ENCODE measurements at regions of chr11 and their contacts with region 1.

Region 1: DNA sequence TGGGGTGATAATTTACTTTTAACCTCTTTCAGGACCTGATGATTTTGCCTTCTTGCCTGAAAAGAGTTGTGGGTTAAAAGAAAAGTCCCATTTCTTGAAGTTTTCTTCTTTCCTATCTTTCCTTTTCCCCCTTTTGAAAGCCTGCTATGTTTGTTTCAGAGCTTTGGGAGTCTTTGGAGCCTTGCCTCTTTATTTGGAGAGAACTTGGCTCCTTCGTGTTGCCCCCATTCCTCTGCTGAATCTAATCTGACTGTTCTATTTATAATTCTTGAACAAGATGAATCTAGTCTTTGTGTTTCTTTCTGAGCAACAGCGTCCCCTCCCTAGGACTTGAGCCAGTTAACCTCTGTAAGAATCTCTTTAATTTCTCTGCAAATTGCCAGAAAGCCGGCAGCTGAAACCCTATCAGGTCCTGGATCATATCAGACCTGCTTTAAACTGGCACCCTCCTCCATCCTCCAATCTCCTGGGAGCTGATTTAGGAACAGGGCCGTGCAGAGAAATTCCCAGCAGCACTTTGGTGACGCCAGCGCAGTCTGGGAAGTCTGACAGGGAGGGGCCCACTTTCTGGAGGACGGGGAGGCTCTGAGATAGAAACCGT is 289.1 kb upstream of the SORL1-AS1 start:
- DNase-seq: peak; percentile 7
- H3K4me3 ChIP-seq: no peak overlapping the region
- H3K27ac ChIP-seq: peak overlapping the region; percentile 53 to 60
- H3K4me1 ChIP-seq: no peaks in the 10 kb centered on the region
- H3K27me3 ChIP-seq: no peaks in the 10 kb centered on the region
- CTCF ChIP-seq: no peak
- POLR2A ChIP-seq: no peak

Region 2: DNA sequence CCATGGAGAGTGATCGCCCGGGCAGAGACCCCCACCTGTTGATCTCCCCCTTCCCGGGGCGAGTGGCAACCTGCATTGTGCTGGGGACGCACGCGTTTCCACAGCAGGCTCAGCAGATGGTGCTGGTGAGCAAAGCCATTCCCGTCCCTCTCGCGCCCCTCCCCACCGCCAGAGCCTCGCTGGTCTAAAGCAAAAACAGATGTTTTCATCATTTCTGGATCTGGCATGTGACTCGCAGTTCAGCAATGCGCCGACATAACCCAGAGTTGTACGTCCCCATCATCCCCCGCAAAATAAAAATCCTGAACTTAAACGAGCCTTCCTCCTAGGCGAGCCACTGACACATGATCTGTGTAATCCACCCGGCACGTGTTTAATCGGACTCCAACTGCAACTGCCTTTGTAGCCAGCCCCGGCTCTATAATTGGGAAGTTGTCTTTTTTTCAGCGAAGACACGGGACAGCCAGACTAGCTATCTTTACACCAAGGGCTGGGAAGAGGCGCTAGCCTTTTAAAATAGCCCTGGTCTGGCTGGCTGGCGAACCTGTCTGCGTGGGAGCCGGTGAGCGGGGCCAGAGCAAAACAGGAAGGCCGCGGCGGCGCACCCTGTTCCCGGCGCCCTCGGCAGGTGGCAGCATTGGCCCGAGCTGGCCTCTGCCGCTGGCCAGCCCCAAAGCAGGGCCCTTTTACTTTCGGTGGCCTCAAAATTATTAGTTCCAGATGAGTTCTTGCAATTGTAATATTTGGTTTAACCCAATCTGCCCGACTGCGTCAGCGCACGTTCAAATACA is 86.1 kb before region 1 on chr11:
- intact Hi-C with region 1: loop called (anchors 5 kb)
- DNase-seq: peak; percentile 81
- H3K4me3 ChIP-seq: peak overlapping the region; percentile 26 to 31
- H3K27ac ChIP-seq: peak overlapping the region; percentile 80 to 84
- H3K4me1 ChIP-seq: no peaks in the 10 kb centered on the region
- H3K27me3 ChIP-seq: no peaks in the 10 kb centered on the region
- CTCF ChIP-seq: peak; percentile 74 to 95 (median 83)
- POLR2A ChIP-seq: no peak

Region 3: GRCh38 chr11:121671283-121672168 is 70.3 kb before region 1 on chr11:
- intact Hi-C with region 1: loop called (anchors 5 kb)
- DNase-seq: no peak
- H3K4me3 ChIP-seq: no peak overlapping the region
- H3K27ac ChIP-seq: peak overlapping the region; percentile 39 to 44
- H3K4me1 ChIP-seq: no peaks in the 10 kb centered on the region
- H3K27me3 ChIP-seq: no peaks in the 10 kb centered on the region
- CTCF ChIP-seq: no peak
- POLR2A ChIP-seq: no peak

Region 4: DNA sequence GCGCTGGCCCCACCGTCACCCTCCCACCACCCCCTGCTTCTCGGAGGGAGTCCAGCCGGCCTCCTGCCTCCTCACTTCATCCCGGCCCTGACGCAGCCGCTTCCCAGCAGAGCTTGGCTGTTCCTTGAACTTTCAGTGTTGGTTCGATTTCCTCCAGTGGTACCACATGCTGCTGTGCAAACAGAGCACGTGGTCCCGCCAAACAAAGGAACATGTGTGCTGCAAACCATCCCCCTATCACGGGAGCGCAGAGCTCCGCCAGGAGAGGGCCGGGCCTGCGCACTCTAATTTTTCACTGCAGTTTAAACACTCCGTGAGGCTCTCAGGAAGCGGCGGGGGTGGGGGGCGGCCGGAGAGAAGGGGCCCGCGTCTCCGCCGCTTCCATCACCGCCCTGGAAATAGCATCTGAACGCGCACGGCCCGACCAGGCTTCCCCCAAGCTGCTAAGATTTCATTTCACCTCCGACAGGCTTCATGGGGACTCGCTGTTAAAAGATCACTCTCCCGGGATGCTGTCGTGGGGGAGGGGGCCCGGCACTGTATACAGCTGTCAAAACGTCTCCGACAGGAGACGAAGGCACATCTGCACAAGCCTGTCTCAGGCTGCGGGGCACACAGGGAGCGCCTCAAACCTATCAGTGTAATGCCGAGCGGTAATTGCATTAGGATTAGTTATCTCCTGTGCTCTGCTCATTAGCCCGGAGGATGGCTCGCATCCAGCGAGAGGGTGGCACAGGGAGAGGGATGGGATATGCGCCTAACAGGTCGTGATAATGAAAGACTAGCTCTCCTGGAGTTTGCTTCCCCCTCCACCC is 19.2 kb before region 1 on chr11:
- intact Hi-C with region 1: loop called (anchors 1 kb)
- DNase-seq: peak; percentile 42
- H3K4me3 ChIP-seq: peak overlapping the region; percentile 24
- H3K27ac ChIP-seq: peak overlapping the region; percentile 61 to 68
- H3K4me1 ChIP-seq: no peaks in the 10 kb centered on the region
- H3K27me3 ChIP-seq: no peaks in the 10 kb centered on the region
- CTCF ChIP-seq: peak in 1 of 4 experiments; percentile 27
- POLR2A ChIP-seq: no peak